Naive thymus-derived CD4-positive, alpha-beta T cell (primary cell): ENCODE measurements at regions of chr2 and their contacts with region 1.

Region 1: DNA sequence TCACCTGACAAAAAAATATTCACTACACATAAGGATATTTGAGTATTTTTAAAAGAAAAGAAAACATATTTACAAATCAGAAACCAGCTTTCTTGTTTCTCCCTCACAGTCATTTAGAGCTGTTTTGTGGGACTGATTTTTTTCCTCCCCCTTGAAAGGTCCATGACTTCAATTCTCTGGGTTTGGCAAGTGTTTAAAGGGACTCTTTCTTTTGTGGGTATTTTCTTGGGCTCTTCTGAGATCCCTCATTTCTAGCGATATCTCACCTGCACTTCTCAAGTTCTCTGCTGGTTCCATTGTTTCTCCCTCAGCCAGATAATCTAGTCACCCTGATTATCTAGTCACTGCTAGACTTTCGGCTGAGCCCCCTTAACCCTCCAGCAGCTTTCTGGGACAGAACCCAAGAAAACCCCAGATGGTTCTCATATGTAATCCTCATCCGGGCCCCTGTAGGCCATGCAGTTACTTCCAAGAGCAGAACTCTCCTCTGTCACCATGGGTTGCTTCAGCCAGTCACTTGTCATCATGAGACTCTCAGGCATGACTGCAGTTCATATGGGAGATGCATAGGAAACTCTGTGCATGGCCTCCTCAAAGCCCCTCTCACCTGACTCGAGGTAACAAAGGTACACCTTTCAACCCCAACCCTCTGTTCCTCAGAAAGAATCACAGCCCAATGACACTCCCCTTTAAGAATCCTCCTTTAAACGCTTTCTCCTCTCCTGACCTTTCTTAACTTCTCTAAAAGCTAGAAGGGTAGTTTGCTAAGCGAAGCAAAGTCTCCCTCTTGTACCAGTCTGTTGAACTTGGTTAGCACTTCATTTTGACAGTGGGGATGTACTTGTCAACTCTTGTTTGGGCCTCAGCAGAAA is 36.7 kb upstream of the ITGA4 start:
- DNase-seq: no peak
- ATAC-seq: no peak
- H3K4me3 ChIP-seq: no peak overlapping the region
- H3K4me3 Mint-ChIP-seq: peak overlapping the region in 5 of 10 donors; percentile 12 to 62 (median 37)
- H3K27ac ChIP-seq: no peak overlapping the region
- H3K27ac Mint-ChIP-seq: peak overlapping the region; percentile 3 to 83 (median 56)
- H3K4me1 ChIP-seq: no peaks in the 10 kb centered on the region
- H3K4me1 Mint-ChIP-seq: peaks cover 13 to 26% (median 20%) of the 10 kb centered on the region in 7 donors
- H3K27me3 ChIP-seq: no peaks in the 10 kb centered on the region
- H3K27me3 Mint-ChIP-seq: no peaks in the 10 kb centered on the region

Region 2: DNA sequence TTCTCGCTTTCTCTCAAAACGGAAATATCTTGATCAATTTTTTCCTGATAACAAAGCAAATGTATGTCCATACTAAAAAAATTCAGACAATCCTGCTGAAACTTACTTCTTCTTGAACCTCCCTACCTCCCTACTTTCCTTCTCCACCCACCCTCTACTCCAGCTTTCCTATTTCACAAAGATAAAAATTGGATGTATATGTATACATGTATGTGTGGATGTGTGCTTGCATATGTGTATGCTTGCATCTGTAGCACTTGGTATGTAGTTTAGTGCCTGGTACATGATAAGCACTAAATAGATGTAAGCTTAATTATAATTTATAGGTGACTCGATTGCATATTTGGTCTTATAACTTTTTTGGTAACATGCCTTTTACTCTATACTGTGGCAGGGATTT is 130.8 kb before region 1 on chr2:
- CTCF ChIA-PET with region 1: no interaction called
- POLR2A ChIA-PET with region 1: no interaction called
- intact Hi-C with region 1: no loop called
- DNase-seq: no peak
- ATAC-seq: no peak
- H3K4me3 ChIP-seq: no peak overlapping the region
- H3K4me3 Mint-ChIP-seq: no peak overlapping the region
- H3K27ac ChIP-seq: no peak overlapping the region
- H3K27ac Mint-ChIP-seq: peak overlapping the region in 3 of 9 donors; percentile 2 to 35 (median 31)
- H3K4me1 ChIP-seq: no peaks in the 10 kb centered on the region
- H3K4me1 Mint-ChIP-seq: peaks cover 5 to 45% (median 21%) of the 10 kb centered on the region in 7 donors
- H3K27me3 ChIP-seq: no peaks in the 10 kb centered on the region
- H3K27me3 Mint-ChIP-seq: no peaks in the 10 kb centered on the region

Region 3: DNA sequence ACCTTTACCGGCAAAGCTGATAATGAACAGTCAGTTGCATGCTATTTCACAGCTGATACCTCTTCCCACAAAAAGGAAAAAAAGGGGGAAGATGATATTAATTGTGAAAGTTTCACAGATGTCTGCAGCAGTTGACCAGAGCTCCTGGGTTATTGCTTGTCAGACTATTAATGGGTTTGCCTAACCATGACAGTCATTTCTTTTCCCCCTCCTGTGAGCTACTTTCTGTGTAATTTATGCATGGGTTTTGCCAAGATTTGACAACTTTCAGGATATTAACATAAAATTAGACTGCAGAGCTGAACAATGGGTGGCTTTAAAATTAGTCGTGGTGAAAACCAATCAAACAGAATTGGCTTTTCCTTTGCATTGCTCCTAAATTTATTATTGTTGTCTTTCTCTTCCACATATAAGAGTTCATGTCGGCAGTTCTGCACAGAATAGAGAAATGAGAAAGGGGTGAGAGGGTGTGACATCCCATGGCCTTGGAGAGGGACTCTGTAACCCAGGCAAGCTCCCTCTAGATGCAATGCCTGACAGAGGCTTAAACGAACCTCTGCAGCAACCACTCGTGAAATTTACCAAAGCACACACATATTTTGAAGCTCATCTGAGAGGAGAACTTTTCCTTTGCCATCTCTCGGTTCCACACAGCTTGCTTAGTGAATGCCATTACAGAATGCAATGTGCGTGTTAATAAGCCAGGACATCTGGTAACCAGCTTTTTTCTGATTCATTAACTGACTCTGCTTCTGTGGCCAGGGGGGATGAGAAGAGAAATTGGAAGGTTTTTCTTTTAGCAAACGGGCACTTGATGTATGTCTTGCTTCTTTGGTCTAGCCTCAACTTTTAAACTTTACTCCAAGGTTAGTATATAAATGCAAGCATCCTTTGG is 45.5 kb before region 1 on chr2:
- CTCF ChIA-PET with region 1: no interaction called
- POLR2A ChIA-PET with region 1: interaction called, 3 read pairs
- intact Hi-C with region 1: loop called in 1 of 2 experiments (anchors 5 kb)
- DNase-seq: no peak
- ATAC-seq: no peak
- H3K4me3 ChIP-seq: no peak overlapping the region
- H3K4me3 Mint-ChIP-seq: no peak overlapping the region
- H3K27ac ChIP-seq: no peak overlapping the region
- H3K27ac Mint-ChIP-seq: no peak overlapping the region
- H3K4me1 ChIP-seq: peaks cover 6 to 17% of the 10 kb centered on the region in 2 donors
- H3K4me1 Mint-ChIP-seq: peaks cover 13 to 30% (median 25%) of the 10 kb centered on the region in 7 donors
- H3K27me3 ChIP-seq: no peaks in the 10 kb centered on the region
- H3K27me3 Mint-ChIP-seq: no peaks in the 10 kb centered on the region

Region 4: GRCh38 chr2:181407171-181407570 is 13.3 kb before region 1 on chr2:
- CTCF ChIA-PET with region 1: no interaction called
- POLR2A ChIA-PET with region 1: no interaction called
- intact Hi-C with region 1: loop called in 1 of 2 experiments (anchors 2 kb)
- DNase-seq: no peak
- ATAC-seq: peak; percentile 59
- H3K4me3 ChIP-seq: no peak overlapping the region
- H3K4me3 Mint-ChIP-seq: no peak overlapping the region
- H3K27ac ChIP-seq: no peak overlapping the region
- H3K27ac Mint-ChIP-seq: no peak overlapping the region
- H3K4me1 ChIP-seq: no peaks in the 10 kb centered on the region
- H3K4me1 Mint-ChIP-seq: peaks cover 6 to 15% (median 9%) of the 10 kb centered on the region in 7 donors
- H3K27me3 ChIP-seq: no peaks in the 10 kb centered on the region
- H3K27me3 Mint-ChIP-seq: no peaks in the 10 kb centered on the region